ENCODE measurements at regions of chr22 and their contacts with region 1.

Region 1: DNA sequence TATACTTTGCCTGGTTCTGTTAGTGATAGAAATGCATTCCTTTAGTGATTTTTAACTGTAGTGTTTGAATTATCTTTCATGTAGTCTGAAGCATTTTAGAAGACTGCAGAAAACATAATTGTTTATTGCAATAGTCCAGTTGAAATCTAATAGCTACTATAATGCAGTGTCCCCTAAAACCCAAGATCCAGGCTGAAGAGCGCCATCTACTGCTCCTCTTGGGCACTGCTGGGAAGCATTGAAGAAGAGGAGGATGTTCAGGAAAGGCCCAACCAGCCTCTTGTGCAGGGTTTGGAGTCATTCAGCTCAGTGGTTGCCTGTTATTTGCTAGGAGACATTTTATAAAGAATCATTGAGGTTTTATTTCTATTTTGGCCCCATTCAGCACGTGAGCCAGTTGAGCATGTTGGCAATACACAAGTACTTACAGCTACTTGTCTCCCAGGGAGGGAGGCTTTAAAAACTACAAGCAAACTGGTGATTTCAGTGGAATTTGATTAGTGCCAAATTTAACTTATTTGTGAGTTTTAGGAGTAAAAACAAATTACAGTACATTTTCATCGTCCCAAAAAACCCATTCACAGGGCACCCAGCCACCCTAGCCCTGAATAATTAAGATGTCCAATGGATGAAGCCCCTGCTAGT is 74.9 kb upstream of the HORMAD2 start:
- DNase-seq: peak; percentile 80
- ATAC-seq: peak; percentile 83
- H3K4me3 Mint-ChIP-seq: no peak overlapping the region
- H3K27ac Mint-ChIP-seq: no peak overlapping the region
- H3K4me1 Mint-ChIP-seq: peaks cover 7% of the 10 kb centered on the region
- H3K27me3 Mint-ChIP-seq: no peaks in the 10 kb centered on the region
- CTCF ChIP-seq: peak; percentile 97

Region 2: GRCh38 chr22:29635734-29636357 is 369.5 kb before region 1 on chr22:
- CTCF ChIA-PET with region 1: interaction called, 19 read pairs
- POLR2A ChIA-PET with region 1: no interaction called
- intact Hi-C with region 1: no loop called
- DNase-seq: no peak
- ATAC-seq: peak; percentile 56
- H3K4me3 Mint-ChIP-seq: no peak overlapping the region
- H3K27ac Mint-ChIP-seq: no peak overlapping the region
- H3K4me1 Mint-ChIP-seq: peaks cover 28% of the 10 kb centered on the region
- H3K27me3 Mint-ChIP-seq: no peaks in the 10 kb centered on the region
- CTCF ChIP-seq: peak; percentile 66

Region 3: DNA sequence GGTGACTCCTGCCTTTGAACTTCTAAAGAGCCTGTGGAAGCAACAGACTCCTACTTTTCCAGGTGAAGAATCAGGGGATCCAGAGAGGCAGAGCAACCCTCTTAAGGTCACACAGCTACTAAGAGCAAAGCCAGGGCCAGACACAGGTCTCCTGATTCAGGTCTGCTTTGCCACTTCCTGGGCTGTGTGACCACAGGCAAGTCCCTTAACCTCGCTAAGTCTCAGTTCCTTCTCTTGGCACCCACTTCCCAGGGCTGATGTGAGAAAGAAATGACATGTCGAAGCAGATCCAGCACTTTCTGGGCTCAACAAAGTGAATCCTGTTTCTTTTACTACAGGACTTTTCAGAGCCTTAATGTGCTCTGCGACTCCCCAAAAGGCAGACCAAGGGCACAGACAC is 208.0 kb before region 1 on chr22:
- CTCF ChIA-PET with region 1: interaction called, 10 read pairs
- POLR2A ChIA-PET with region 1: no interaction called
- intact Hi-C with region 1: no loop called
- DNase-seq: peak; percentile 41
- ATAC-seq: peak; percentile 60
- H3K4me3 Mint-ChIP-seq: no peak overlapping the region
- H3K27ac Mint-ChIP-seq: peak overlapping the region; percentile 64
- H3K4me1 Mint-ChIP-seq: peaks cover 14% of the 10 kb centered on the region
- H3K27me3 Mint-ChIP-seq: no peaks in the 10 kb centered on the region
- CTCF ChIP-seq: no peak

Region 4: GRCh38 chr22:29994027-29994715 is 11.2 kb before region 1 on chr22:
- CTCF ChIA-PET with region 1: interaction called, 32 read pairs
- POLR2A ChIA-PET with region 1: no interaction called
- intact Hi-C with region 1: no loop called
- DNase-seq: no peak
- ATAC-seq: peak; percentile 56
- H3K4me3 Mint-ChIP-seq: no peak overlapping the region
- H3K27ac Mint-ChIP-seq: no peak overlapping the region
- H3K4me1 Mint-ChIP-seq: peaks cover 7% of the 10 kb centered on the region
- H3K27me3 Mint-ChIP-seq: no peaks in the 10 kb centered on the region
- CTCF ChIP-seq: no peak

Region 5: GRCh38 chr22:30027169-30027568 is 21.8 kb after region 1 on chr22:
- CTCF ChIA-PET with region 1: interaction called, 15 read pairs
- POLR2A ChIA-PET with region 1: no interaction called
- intact Hi-C with region 1: no loop called
- DNase-seq: no peak
- ATAC-seq: no peak
- H3K4me3 Mint-ChIP-seq: no peak overlapping the region
- H3K27ac Mint-ChIP-seq: no peak overlapping the region
- H3K4me1 Mint-ChIP-seq: peaks cover 12% of the 10 kb centered on the region
- H3K27me3 Mint-ChIP-seq: no peaks in the 10 kb centered on the region
- CTCF ChIP-seq: no peak

Region 6: DNA sequence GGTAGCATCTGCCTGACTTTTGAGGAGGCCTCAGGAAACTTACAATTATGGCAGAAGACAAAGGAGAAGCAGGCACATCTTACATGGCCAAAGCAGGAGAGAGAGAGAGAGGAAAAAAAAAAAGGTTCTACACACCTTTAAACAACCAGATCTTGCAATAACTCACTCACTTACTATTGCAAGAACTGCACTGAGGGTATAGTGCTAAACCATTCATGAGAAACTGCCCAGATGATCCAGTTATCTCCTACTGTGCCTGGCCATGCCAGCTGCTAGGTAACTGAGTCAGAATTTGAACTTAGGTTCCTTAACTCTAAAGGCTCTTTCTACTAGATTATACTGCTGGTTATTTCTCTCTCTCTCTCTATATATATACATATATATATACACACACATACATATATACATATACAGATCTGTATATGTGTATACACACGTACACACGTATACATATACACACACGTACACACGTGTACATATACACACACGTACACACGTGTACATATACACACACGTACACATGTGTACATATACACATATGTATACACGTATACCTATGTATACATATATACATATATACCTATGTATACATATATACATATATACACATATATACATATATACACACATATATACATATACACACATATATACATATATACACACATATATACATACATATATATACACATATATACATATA is 82.4 kb after region 1 on chr22:
- CTCF ChIA-PET with region 1: interaction called, 13 read pairs
- POLR2A ChIA-PET with region 1: no interaction called
- intact Hi-C with region 1: no loop called
- DNase-seq: no peak
- ATAC-seq: no peak
- H3K4me3 Mint-ChIP-seq: no peak overlapping the region
- H3K27ac Mint-ChIP-seq: no peak overlapping the region
- H3K4me1 Mint-ChIP-seq: peaks cover 9% of the 10 kb centered on the region
- H3K27me3 Mint-ChIP-seq: peaks cover 14% of the 10 kb centered on the region
- CTCF ChIP-seq: no peak

Measured in activated CD8-positive, alpha-beta T cell treated with anti-CD3 and anti-CD28 coated beads for 36 hours (primary cell).